CD8-positive, alpha-beta memory T cell (primary cell): ENCODE measurements at regions of chr22 and their contacts with region 1.

Region 1: GRCh38 chr22:20545681-20546521 is 38.5 kb downstream of the MED15 start:
- DNase-seq: no peak
- H3K4me3 ChIP-seq: no peak overlapping the region
- H3K4me3 Mint-ChIP-seq: peak overlapping the region in 3 of 7 donors; percentile 6 to 45 (median 11)
- H3K27ac ChIP-seq: peak overlapping the region; percentile 47
- H3K27ac Mint-ChIP-seq: peak overlapping the region; percentile 32 to 91 (median 59)
- H3K4me1 ChIP-seq: peaks cover 63% of the 10 kb centered on the region
- H3K4me1 Mint-ChIP-seq: peaks cover 62 to 80% (median 74%) of the 10 kb centered on the region in 3 donors
- H3K27me3 ChIP-seq: no peaks in the 10 kb centered on the region
- H3K27me3 Mint-ChIP-seq: no peaks in the 10 kb centered on the region

Region 2: DNA sequence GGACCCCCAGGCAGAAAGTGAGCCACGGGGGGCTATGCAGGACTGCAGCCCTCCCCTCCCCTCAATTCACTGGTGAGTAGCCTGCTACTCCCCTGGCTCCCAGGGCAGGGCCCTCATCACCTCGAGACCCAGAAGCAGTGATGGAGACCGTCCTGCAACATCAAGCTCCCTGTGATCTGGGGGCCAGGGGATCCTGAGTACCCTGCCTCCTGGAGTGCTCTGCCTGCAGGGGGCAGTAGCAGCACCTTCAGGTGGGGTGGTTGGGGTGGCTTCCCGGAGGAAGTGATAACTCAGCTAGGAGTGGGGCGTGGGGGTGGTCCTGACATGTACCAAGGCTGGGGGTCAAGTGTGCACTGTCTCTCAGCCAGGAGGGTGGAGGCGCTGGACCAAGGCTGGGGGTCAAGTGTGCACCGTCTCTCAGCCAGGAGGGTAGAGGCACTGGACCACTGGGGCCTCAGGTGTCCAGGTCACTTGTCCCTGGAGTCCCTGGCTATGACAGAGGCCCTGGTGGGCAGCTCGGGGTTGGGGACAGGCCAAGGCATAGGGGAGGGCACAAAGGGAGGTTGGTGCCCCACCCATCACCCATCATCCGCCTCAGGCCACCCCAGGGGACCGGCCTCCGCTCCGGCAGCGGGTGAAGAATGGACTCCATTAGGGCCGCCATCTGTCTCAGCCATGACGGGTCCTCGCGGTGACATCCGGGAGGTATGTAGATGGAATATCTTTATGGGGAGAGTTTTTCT is 287.1 kb before region 1 on chr22:
- CTCF ChIA-PET with region 1: no interaction called
- POLR2A ChIA-PET with region 1: no interaction called
- DNase-seq: no peak
- H3K4me3 ChIP-seq: no peak overlapping the region
- H3K4me3 Mint-ChIP-seq: no peak overlapping the region
- H3K27ac ChIP-seq: no peak overlapping the region
- H3K27ac Mint-ChIP-seq: peak overlapping the region in 1 of 8 donors; percentile 29
- H3K4me1 ChIP-seq: no peaks in the 10 kb centered on the region
- H3K4me1 Mint-ChIP-seq: peaks cover 0 to 15% (median 6%) of the 10 kb centered on the region in 3 donors
- H3K27me3 ChIP-seq: no peaks in the 10 kb centered on the region
- H3K27me3 Mint-ChIP-seq: peaks cover 0 to 2% of the 10 kb centered on the region in 2 donors

Region 3: DNA sequence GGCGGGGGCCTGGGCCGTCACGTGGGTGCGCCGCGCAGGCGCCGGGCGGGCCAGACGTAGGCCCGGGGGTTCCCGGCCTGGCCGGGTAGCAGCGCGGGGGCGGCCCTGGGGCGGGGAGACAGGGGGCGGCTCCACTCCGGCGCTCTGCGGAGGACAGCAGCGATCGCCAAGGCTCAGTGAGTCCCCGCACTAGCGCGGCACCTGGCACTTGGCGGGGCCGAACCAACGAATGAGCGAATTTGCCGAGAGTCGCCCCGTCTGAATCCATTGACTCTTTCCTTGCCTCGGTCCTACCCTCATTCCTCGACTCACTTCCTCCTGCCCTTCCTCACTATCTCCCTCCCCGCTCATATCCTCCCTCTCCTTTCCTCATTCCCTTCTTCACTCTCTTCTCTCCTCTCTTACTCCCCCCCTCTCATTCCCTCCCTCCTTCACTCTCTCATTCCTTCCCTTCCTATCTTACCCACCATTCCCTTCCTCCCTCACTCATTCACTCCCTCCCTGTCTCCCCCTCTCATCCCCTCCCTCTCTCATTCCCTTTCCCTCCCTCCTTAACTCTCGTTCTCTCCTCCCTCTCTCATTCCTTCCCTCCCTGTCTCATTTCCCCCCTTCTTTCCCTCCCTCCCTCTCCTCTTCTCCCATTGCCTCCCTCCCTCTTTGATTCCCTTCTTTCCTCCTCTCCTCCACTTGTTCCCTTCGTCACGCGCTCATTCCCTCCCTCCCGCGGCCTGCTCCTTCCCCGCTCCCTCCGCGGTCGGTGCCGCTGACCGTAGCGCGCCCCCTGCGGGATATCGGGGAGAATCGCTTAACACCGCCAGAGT is 49.8 kb before region 1 on chr22:
- CTCF ChIA-PET with region 1: interaction called, 3 read pairs
- POLR2A ChIA-PET with region 1: interaction called, 14 read pairs
- DNase-seq: peak; percentile 90 to 94 (median 92)
- H3K4me3 ChIP-seq: peak overlapping the region; percentile 93
- H3K4me3 Mint-ChIP-seq: peak overlapping the region; percentile 87 to 96 (median 95)
- H3K27ac ChIP-seq: peak overlapping the region; percentile 96
- H3K27ac Mint-ChIP-seq: peak overlapping the region; percentile 77 to 99 (median 96)
- H3K4me1 ChIP-seq: peaks cover 29% of the 10 kb centered on the region
- H3K4me1 Mint-ChIP-seq: peaks cover 29 to 54% (median 34%) of the 10 kb centered on the region in 3 donors
- H3K27me3 ChIP-seq: no peaks in the 10 kb centered on the region
- H3K27me3 Mint-ChIP-seq: peaks cover 0 to 1% of the 10 kb centered on the region in 2 donors